GM23248 (cell line): ENCODE measurements at regions of chr18 and their contacts with region 1.

Region 1: DNA sequence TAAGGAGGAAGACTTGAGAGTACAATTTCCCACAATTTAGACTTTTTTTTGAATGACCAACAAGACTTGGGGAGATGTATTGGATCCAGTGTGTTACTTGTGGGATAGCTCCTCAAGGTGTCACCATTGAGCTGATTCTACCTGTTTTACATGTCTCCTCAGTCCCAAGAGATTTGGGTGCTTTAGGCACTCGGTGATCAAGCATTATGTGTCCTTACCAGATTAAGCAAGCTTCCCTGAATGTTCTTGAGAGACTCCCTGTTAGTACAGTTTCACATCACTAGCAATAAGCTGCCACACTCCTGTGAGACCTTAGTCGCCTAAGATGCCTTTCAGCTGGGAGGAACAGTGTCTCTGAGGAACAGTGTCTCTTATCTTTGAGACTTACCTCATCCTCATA is 384.3 kb upstream of the SYT4 start:
- DNase-seq: peak; percentile 71
- H3K4me3 ChIP-seq: no peak overlapping the region
- H3K27ac ChIP-seq: peak overlapping the region; percentile 38
- H3K4me1 ChIP-seq: peaks cover 42% of the 10 kb centered on the region
- H3K27me3 ChIP-seq: no peaks in the 10 kb centered on the region

Region 2: DNA sequence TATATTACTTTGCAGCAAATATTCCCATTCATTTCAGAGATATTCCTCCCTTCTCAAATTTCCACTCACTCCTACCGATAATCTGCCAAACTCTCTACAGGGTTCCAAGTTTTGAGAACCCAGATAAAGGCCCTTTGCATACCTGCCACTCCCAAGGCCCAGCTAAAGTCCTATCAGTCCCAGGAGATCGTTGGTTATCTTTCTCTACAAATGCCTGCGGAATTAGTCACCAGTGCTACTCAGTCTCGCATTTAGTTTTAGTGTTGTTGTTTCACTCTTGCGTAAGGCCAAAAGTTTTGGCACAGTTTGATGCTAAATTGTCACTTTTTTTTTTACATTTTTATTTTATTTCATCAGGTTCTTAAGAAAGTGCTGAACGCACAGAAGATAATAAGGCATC is 989.9 kb after region 1 on chr18:
- in situ Hi-C with region 1: loop called (anchors 25 kb)
- DNase-seq: peak; percentile 78
- H3K4me3 ChIP-seq: no peak overlapping the region
- H3K27ac ChIP-seq: no peak overlapping the region
- H3K4me1 ChIP-seq: peaks cover 24% of the 10 kb centered on the region
- H3K27me3 ChIP-seq: no peaks in the 10 kb centered on the region

Region 3: DNA sequence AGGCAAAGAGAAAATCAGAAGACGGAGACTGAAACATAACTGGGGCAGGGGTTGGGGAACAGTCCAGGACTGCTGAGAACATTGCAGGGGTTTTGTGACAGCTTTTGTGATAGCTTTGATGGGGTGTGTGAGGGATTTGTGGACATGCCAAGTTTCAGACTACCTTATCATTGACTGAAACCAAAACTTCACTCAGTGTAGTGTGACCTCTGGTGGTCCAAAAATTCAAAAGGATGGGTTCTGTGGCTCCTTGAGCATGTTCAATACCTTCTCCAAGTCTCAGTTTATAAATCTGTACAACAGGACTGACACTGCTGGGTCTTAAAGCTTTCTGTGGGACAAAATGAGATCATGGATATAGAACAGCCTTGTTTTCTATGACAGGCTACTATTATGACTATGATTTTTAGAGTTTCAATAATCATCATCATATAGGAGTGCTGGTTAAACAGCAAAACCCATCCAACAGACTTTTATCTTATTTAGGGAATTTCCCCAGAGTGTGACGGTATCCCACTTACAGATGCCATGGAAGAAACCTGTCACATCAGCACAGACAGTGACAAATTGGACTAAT is 1694.5 kb after region 1 on chr18:
- in situ Hi-C with region 1: loop called (anchors 25 kb)
- DNase-seq: no peak
- H3K4me3 ChIP-seq: no peak overlapping the region
- H3K27ac ChIP-seq: no peak overlapping the region
- H3K4me1 ChIP-seq: peaks cover 26% of the 10 kb centered on the region
- H3K27me3 ChIP-seq: no peaks in the 10 kb centered on the region